Body of pancreas (tissue), 4 donors: ENCODE measurements at regions of chr1 and their contacts with region 1.

Region 1: GRCh38 chr1:34162852-34163766 is 1.9 kb downstream of the CSMD2 start:
- DNase-seq: peak; percentile 75 to 81 (median 80)
- ATAC-seq: peak; percentile 87
- H3K4me3 ChIP-seq: peak overlapping the region in 1 of 2 donors; percentile 12
- H3K27ac ChIP-seq: no peak overlapping the region
- H3K4me1 ChIP-seq: peaks cover 37% of the 10 kb centered on the region
- H3K27me3 ChIP-seq: peaks cover 4 to 33% of the 10 kb centered on the region in 2 donors
- CTCF ChIP-seq: peak; percentile 46 to 83 (median 72)
- POLR2A ChIP-seq: no peak

Region 2: GRCh38 chr1:33633019-33633801 is 529.9 kb before region 1 on chr1:
- intact Hi-C with region 1: loop called (anchors 10 kb)
- DNase-seq: peak; percentile 93 to 96 (median 94)
- ATAC-seq: peak; percentile 87
- H3K4me3 ChIP-seq: no peak overlapping the region
- H3K27ac ChIP-seq: no peak overlapping the region
- H3K4me1 ChIP-seq: peaks cover 13% of the 10 kb centered on the region
- H3K27me3 ChIP-seq: no peaks in the 10 kb centered on the region
- CTCF ChIP-seq: peak; percentile 91 to 99 (median 96)
- POLR2A ChIP-seq: no peak